ENCODE measurements at regions of chr19 and their contacts with region 1.

Region 1: GRCh38 chr19:39412100-39412866 is at the start of gene PLEKHG2:
- DNase-seq: peak; percentile 98
- ATAC-seq: peak; percentile 67
- H3K4me3 ChIP-seq: peak within 1 kb of the TSS; percentile 75 to 89
- H3K27ac ChIP-seq: peak within 1 kb of the TSS; percentile 6 to 92
- H3K4me1 ChIP-seq: no peaks in the 10 kb centered on the region
- H3K27me3 ChIP-seq: no peaks in the 10 kb centered on the region
- total RNA-seq, gene PLEKHG2: 86.4 to 98.1 TPM

Region 2: GRCh38 chr19:39363901-39364457 is 48.3 kb before region 1 on chr19:
- intact Hi-C with region 1: no loop called
- DNase-seq: peak in 1 of 2 donors; percentile 70
- ATAC-seq: peak; percentile 73
- H3K4me3 ChIP-seq: no peak overlapping the region
- H3K27ac ChIP-seq: no peak overlapping the region
- H3K4me1 ChIP-seq: no peaks in the 10 kb centered on the region
- H3K27me3 ChIP-seq: no peaks in the 10 kb centered on the region

Region 3: GRCh38 chr19:39397360-39398296 is 14.7 kb before region 1 on chr19:
- intact Hi-C with region 1: loop called (anchors 1 to 2 kb)
- DNase-seq: peak; percentile 94 to 97
- ATAC-seq: peak; percentile 88
- H3K4me3 ChIP-seq: no peak overlapping the region
- H3K27ac ChIP-seq: peak overlapping the region in 1 of 2 donors; percentile 86
- H3K4me1 ChIP-seq: no peaks in the 10 kb centered on the region
- H3K27me3 ChIP-seq: no peaks in the 10 kb centered on the region

Region 4: DNA sequence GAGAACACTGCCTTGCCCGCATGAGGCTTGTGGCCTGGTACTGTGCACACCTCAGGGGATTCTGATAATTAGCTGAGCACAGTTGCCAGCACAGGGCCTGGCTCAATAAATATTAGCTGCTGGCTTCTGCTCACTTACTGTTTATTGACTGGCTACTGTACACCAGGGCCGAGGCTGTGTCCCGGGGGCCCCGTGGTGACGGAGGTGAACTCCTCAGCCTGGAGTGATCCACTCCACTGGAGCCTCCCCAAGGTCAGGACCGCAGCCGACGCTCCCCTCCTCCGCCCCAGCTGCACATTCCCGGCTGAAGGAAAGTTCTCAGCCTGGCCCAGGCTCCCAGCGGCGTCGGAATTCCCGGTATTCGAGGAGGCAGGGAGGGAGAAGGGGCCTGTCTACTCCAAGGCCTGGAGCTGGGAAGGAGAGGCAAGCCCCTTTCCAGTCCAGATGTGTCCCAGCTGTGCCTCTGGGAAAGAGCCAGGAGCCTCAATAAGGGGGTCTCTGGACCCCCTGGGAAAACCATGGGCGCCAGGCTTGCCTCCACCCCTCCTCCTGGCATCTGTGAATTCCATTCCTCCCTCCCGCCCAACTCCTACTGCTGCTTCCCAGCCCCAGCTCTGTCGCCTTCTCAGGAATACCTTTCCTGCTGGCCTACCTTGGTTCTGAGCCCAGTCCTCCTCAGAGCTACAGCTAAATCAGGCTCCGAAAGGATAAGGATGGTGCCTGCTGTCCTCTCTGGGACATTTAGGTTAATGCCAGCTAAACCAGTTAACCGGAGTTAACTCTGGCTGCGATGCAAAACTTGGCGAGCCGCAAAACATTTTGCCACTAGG is 16.2 kb after region 1 on chr19:
- intact Hi-C with region 1: loop called in 1 of 2 experiments (anchors 2 kb)
- DNase-seq: peak; percentile 85 to 90
- ATAC-seq: peak; percentile 68
- H3K4me3 ChIP-seq: no peak overlapping the region
- H3K27ac ChIP-seq: peak overlapping the region; percentile 53 to 91
- H3K4me1 ChIP-seq: no peaks in the 10 kb centered on the region
- H3K27me3 ChIP-seq: no peaks in the 10 kb centered on the region

Region 5: GRCh38 chr19:39435499-39436349 is 23.4 kb after region 1 on chr19 and contains the start of gene RPS16:
- intact Hi-C with region 1: loop called in 1 of 2 experiments (anchors 1 kb)
- DNase-seq: peak; percentile 99 to 100
- ATAC-seq: peak; percentile 99
- H3K4me3 ChIP-seq: peak within 1 kb of the TSS; percentile 31 to 61
- H3K27ac ChIP-seq: peak within 1 kb of the TSS in 1 of 2 donors; percentile 49
- H3K4me1 ChIP-seq: peaks cover 0 to 2% of the 10 kb centered on the region in 2 donors
- H3K27me3 ChIP-seq: no peaks in the 10 kb centered on the region
- total RNA-seq, gene RPS16: 1,268 to 1,273 TPM

Region 6: DNA sequence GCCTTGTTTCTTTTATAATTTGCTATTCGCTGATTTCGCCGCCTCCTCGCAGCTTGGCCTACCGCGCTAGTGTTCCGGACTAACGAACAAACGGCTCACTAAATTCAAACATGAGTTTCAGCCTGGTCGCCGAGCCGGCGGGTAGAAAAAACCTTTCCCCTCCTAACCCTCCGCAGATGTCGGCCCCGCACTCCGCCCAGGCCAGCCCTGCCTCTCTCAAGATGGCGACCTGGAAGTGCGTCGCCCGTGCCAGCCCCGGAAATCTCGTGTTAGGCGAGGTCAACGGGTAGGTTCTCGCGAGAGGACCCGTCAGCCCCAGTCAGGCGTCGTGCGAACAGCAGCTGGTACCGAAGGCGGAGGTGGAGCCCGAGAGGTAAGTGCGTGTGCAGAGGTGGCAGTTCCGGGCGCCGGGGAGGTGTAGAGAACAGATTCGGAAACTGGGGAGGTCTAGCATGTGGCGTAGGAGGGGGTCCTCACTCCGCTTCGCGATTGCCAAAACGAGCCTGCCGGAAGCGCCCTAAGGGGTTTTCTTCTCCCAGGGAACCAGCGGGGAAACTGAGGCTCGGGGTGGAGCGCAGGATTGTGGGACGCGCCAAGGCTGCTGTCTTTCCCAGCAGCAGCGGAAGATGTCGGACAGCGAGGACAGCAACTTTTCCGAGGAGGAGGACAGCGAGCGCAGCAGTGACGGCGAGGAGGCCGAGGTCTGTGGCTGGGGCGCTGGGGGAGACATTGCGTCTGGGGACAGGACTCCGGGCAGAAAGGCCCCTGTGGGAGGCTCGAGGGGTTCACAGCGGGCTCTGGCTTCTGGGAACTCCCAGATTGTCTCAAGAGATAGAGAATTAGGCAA is 33.2 kb after region 1 on chr19 and contains the start of gene SUPT5H:
- intact Hi-C with region 1: loop called in 1 of 2 experiments (anchors 2 kb)
- DNase-seq: peak; percentile 98 to 99
- ATAC-seq: peak; percentile 99
- H3K4me3 ChIP-seq: peak within 1 kb of the TSS; percentile 79 to 94
- H3K27ac ChIP-seq: peak within 1 kb of the TSS; percentile 58 to 82
- H3K4me1 ChIP-seq: peaks cover 0 to 2% of the 10 kb centered on the region in 2 donors
- H3K27me3 ChIP-seq: no peaks in the 10 kb centered on the region
- total RNA-seq, gene SUPT5H: 90.1 to 103 TPM

Region 7: DNA sequence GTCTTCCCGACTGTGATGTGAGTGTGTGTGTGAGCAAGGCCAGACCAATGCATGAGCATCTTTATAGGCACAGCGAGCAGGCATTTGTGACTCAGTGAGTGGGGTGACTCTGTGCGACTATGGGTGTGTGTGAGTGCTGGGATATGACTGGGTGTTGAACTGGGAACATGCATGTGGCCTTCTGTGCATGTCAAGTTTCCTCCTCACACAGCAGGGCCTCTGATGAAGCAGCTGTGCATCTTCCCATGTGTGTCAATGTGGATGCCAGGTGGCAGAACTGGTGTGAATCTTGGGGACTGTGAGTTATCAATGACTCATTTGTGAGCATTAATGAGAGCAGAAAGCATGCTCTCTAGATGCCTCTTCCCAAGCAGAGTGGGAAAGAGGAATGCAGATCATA is 279.9 kb after region 1 on chr19:
- intact Hi-C with region 1: no loop called
- DNase-seq: no peak
- ATAC-seq: no peak
- H3K4me3 ChIP-seq: no peak overlapping the region
- H3K27ac ChIP-seq: no peak overlapping the region
- H3K4me1 ChIP-seq: no peaks in the 10 kb centered on the region
- H3K27me3 ChIP-seq: no peaks in the 10 kb centered on the region

Measured in aorta (tissue), 5 donors.